ENCODE measurements at regions of chr2 and their contacts with region 1.

Region 1: DNA sequence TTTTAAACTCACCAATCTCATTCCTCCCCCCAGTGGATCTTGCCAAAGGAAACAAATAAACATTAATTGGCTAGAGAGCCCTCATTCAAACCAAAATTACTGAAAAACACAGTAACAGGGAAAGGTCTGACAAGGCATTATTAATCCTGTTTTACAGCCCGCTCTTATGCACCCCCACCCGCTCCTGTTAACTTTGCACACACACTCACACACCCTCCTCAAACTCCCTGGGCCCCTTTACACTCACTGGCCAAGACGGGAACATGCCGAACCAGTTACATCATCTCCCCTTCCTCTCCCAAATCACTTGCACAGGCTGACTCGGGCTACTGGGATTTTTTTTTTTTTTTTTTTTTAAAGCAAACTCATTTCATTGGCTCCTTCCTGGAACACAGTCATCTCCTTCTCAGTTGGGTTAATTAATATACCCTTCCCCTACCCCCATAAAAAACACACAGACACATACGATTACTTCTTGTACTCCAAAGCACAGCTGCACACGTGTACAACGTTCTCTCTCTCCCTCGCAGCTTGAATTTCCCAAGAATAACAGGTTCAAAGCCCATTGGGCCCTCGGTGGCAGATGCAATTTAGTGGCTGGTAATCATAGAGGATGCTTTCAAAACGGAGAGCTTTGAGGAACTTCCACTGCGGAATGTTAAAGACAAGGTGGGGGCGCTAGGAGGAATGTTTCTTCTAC is 31.8 kb downstream of the KLF7 start:
- DNase-seq: no peak
- ATAC-seq: no peak
- H3K4me3 ChIP-seq: no peak overlapping the region
- H3K27ac ChIP-seq: no peak overlapping the region
- H3K4me1 ChIP-seq: peaks cover 2% of the 10 kb centered on the region; the same call in 1 of the 2 replicates
- H3K27me3 ChIP-seq: no peaks in the 10 kb centered on the region
- CTCF ChIP-seq: no peak
- EP300 ChIP-seq: no peak
- POLR2A ChIP-seq: no peak
- RAD21 ChIP-seq: no peak

Region 2: GRCh38 chr2:206915121-206915520 is 218.8 kb before region 1 on chr2:
- CTCF ChIA-PET with region 1: no interaction called
- POLR2A ChIA-PET with region 1: no interaction called
- RAD21 ChIA-PET with region 1: no interaction called
- SMC1A ChIA-PET with region 1: no interaction called
- in situ Hi-C with region 1: no loop called
- intact Hi-C with region 1: no loop called
- DNase-seq: no peak
- ATAC-seq: peak; percentile 82
- H3K4me3 ChIP-seq: no peak overlapping the region
- H3K27ac ChIP-seq: no peak overlapping the region
- H3K4me1 ChIP-seq: no peaks in the 10 kb centered on the region
- H3K27me3 ChIP-seq: no peaks in the 10 kb centered on the region
- CTCF ChIP-seq: no peak
- EP300 ChIP-seq: no peak
- POLR2A ChIP-seq: no peak
- RAD21 ChIP-seq: no peak

Region 3: GRCh38 chr2:207119048-207119447 is 14.9 kb before region 1 on chr2:
- CTCF ChIA-PET with region 1: interaction called, 3 read pairs
- POLR2A ChIA-PET with region 1: no interaction called
- RAD21 ChIA-PET with region 1: no interaction called
- SMC1A ChIA-PET with region 1: interaction called, 12 read pairs
- in situ Hi-C with region 1: no loop called
- intact Hi-C with region 1: no loop called
- DNase-seq: no peak
- ATAC-seq: no peak
- H3K4me3 ChIP-seq: no peak overlapping the region
- H3K27ac ChIP-seq: no peak overlapping the region
- H3K4me1 ChIP-seq: no peaks in the 10 kb centered on the region
- H3K27me3 ChIP-seq: no peaks in the 10 kb centered on the region
- CTCF ChIP-seq: no peak
- EP300 ChIP-seq: no peak
- POLR2A ChIP-seq: no peak
- RAD21 ChIP-seq: no peak